ENCODE measurements at regions of chr9 and their contacts with region 1.

Region 1: DNA sequence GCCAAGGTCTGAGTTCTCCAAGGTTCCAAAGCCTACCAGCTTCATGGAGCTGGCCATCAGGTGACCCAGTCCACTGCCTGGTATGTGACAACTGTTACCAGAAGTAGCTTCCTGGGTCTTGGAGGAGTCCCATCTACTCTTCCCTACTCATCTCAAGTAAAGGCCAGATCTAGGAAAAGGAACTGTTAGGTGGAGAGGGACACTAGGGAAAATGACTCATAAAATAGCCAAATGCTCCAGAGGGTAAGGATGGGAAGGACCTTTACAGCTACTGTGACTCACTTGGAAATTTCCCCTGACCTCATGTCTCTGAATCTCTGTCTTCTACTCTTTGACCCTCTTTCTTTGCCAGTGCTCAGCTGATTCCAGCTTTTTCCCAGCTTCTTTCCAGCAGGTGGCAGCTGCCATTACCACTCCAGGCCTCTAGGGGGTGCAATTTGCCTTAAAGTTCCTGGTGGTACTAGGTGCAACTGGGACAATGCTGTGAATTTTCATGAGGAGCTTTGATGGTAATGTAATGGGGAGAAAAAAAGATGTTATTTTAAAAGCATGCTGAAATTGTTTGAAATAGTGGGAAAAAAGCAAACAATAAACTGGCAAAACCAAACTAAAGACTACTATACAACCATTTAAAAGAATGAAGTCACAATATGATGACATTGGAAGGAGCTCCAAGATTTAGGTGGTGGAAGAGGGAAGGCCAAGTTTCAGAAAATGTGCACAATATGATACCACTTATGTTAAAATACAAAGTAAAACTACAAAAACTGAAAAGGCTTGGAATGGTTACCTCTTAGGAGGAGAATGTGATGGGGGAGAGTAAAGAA is 27.1 kb upstream of the MYORG start:
- DNase-seq: peak; percentile 66
- H3K4me3 ChIP-seq: no peak overlapping the region
- H3K27ac ChIP-seq: no peak overlapping the region
- H3K4me1 ChIP-seq: no peaks in the 10 kb centered on the region
- H3K27me3 ChIP-seq: no peaks in the 10 kb centered on the region
- CTCF ChIP-seq: peak; percentile 87 to 98
- POLR2A ChIP-seq: no peak

Region 2: DNA sequence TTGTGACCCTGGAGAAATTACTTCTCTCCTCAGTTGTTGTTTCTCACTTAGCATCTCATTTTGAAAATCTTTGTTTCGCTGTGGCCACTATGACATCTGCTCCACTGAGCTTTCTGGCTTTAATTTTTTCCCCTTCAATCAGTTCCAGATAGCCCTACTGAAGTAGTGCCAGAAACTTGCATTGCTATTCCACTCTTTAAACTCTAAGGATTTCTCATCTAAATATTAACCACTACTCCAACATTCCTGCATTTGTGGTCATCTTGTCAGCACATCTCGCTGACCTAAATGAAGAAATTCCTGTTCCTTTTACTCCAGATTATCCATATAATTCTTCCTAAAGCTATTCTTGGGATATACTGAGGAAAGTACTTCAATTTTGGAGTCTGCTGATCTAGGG is 914.7 kb before region 1 on chr9:
- CTCF ChIA-PET with region 1: no interaction called
- POLR2A ChIA-PET with region 1: no interaction called
- dilution Hi-C with region 1: no loop called
- intact Hi-C with region 1: no loop called
- DNase-seq: no peak
- H3K4me3 ChIP-seq: no peak overlapping the region
- H3K27ac ChIP-seq: no peak overlapping the region
- H3K4me1 ChIP-seq: no peaks in the 10 kb centered on the region
- H3K27me3 ChIP-seq: no peaks in the 10 kb centered on the region
- CTCF ChIP-seq: no peak
- POLR2A ChIP-seq: no peak

Region 3: GRCh38 chr9:34171753-34172535 is 231.8 kb before region 1 on chr9:
- CTCF ChIA-PET with region 1: no interaction called
- POLR2A ChIA-PET with region 1: no interaction called
- dilution Hi-C with region 1: no loop called
- intact Hi-C with region 1: no loop called
- DNase-seq: no peak
- H3K4me3 ChIP-seq: no peak overlapping the region
- H3K27ac ChIP-seq: no peak overlapping the region
- H3K4me1 ChIP-seq: no peaks in the 10 kb centered on the region
- H3K27me3 ChIP-seq: no peaks in the 10 kb centered on the region
- CTCF ChIP-seq: no peak
- POLR2A ChIP-seq: no peak

Region 4: GRCh38 chr9:34185778-34186551 is 217.8 kb before region 1 on chr9:
- CTCF ChIA-PET with region 1: no interaction called
- POLR2A ChIA-PET with region 1: no interaction called
- dilution Hi-C with region 1: no loop called
- intact Hi-C with region 1: no loop called
- DNase-seq: peak; percentile 92
- H3K4me3 ChIP-seq: peak overlapping the region in 1 of 3 experiments; percentile 34
- H3K27ac ChIP-seq: peak overlapping the region; percentile 50
- H3K4me1 ChIP-seq: peaks cover 20% of the 10 kb centered on the region
- H3K27me3 ChIP-seq: no peaks in the 10 kb centered on the region
- CTCF ChIP-seq: no peak
- POLR2A ChIP-seq: peak; percentile 63

Region 5: GRCh38 chr9:34252670-34253459 is 150.9 kb before region 1 on chr9:
- CTCF ChIA-PET with region 1: no interaction called
- POLR2A ChIA-PET with region 1: no interaction called
- dilution Hi-C with region 1: no loop called
- intact Hi-C with region 1: no loop called
- DNase-seq: peak; percentile 52
- H3K4me3 ChIP-seq: no peak overlapping the region
- H3K27ac ChIP-seq: no peak overlapping the region
- H3K4me1 ChIP-seq: no peaks in the 10 kb centered on the region
- H3K27me3 ChIP-seq: no peaks in the 10 kb centered on the region
- CTCF ChIP-seq: peak; percentile 80 to 83
- POLR2A ChIP-seq: no peak

Region 6: GRCh38 chr9:34334337-34334824 is 69.4 kb before region 1 on chr9:
- CTCF ChIA-PET with region 1: interaction called, 12 read pairs
- POLR2A ChIA-PET with region 1: no interaction called
- dilution Hi-C with region 1: no loop called
- intact Hi-C with region 1: no loop called
- DNase-seq: no peak
- H3K4me3 ChIP-seq: no peak overlapping the region
- H3K27ac ChIP-seq: no peak overlapping the region
- H3K4me1 ChIP-seq: no peaks in the 10 kb centered on the region
- H3K27me3 ChIP-seq: no peaks in the 10 kb centered on the region
- CTCF ChIP-seq: no peak
- POLR2A ChIP-seq: no peak

Region 7: DNA sequence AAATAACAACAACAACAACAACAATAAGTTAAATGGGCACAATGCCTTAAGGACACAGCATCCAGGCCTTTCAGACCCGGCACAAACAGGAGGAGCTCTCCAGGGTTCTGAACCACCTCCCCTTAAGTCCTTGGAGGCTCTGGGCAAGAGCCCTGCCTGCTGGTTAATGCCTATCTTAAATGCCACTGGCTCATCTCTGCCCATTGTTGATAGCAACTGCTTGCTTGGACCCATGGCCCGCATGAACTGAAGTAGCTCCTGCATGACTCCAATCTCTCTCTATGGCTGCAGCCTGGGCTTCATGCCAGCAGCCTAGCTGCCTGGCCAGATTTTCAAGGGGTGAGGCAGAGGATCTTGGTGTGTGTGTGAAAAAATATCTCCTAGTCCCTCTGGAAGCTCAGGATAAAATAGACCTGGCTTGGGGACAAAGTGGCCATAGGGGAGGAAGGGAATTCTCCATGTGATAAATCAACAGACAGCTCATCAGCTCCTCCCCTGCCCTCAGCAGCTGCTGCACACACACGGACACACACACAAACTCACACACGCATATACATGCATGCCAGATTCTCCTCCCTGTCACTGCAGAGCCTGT is 27.2 kb after region 1 on chr9:
- CTCF ChIA-PET with region 1: interaction called, 108 read pairs
- POLR2A ChIA-PET with region 1: no interaction called
- dilution Hi-C with region 1: no loop called
- intact Hi-C with region 1: no loop called
- DNase-seq: peak; percentile 64
- H3K4me3 ChIP-seq: no peak overlapping the region
- H3K27ac ChIP-seq: no peak overlapping the region
- H3K4me1 ChIP-seq: peaks cover 15% of the 10 kb centered on the region
- H3K27me3 ChIP-seq: no peaks in the 10 kb centered on the region
- CTCF ChIP-seq: no peak
- POLR2A ChIP-seq: no peak

Region 8: DNA sequence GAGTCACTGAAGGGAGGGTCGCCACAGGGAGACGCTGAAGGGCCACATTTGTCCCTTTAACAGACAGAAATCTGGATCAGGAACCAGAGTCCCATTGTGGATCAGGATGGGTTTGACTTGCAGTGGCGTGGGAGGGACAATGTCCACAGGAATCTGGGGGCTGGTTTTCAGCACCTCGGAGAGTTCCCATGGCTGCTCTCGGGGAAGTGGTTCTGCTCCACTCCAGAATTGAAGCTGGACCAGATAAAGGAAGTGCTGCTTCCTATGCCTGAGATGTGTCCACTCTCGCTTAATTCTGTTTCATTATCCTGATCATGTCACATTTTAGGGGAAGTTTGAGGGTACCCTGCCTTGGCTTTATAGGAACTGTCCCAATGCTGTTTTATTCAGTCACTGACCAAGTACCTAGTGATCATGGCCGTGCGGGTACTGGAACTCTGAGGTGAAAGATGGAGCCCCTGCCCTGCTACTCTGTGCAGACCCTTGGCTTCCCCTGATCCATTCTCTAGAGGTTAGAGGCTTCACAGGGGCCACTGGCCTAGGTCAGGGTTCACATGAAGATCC is 90.3 kb after region 1 on chr9:
- CTCF ChIA-PET with region 1: interaction called, 45 read pairs
- POLR2A ChIA-PET with region 1: no interaction called
- dilution Hi-C with region 1: no loop called
- intact Hi-C with region 1: no loop called
- DNase-seq: peak; percentile 49
- H3K4me3 ChIP-seq: no peak overlapping the region
- H3K27ac ChIP-seq: no peak overlapping the region
- H3K4me1 ChIP-seq: peaks cover 14% of the 10 kb centered on the region
- H3K27me3 ChIP-seq: peaks cover 6 to 8% of the 10 kb centered on the region in 2 experiments
- CTCF ChIP-seq: no peak
- POLR2A ChIP-seq: no peak

Region 9: DNA sequence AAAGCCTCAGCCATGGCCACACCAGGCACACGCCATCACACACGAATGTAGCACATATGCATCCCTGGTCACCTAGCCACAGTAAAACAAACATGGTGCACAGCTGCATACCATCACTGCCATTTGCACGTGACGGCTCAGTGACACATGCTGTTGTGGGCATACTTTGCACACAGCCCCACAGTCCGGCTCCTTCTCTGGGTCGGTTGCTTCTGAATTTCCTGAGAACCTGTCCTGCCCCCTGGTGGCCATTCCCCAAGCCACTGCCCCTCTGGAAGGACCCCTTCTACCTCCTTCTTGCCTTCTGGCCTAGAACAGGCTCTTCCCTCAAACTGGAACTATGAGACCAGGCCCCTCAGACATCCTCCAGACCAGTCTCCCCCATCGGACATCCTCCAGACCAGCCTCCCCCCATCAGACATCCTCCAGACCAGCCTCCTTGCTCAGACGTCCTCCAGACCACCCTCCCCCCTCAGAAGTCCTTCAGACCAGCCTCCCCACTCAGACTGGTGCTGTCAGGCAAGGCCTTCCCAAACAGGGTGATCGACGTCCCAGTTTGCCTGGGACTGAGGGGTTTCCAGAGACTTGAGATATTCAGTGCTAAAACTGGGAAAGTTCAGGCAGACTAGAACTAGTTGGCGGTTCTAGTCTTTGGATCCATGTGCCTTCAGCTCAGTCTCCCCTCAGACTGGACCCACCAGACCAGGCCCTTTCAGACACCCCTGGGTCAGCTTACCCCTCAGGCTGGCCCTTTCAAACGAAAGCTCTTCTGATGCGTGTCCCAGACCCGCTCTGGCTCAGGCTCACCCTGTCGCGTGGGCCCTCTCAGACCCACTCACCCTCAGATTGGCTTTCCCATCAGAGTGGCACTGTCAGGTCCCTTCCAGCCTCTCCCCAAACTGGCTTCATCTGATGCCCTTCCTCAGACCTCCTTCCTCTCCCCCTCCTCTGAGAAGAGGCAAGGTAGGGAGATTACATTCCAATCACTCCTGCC is 143.4 kb after region 1 on chr9:
- CTCF ChIA-PET with region 1: interaction called, 141 read pairs
- POLR2A ChIA-PET with region 1: no interaction called
- dilution Hi-C with region 1: no loop called
- intact Hi-C with region 1: loop called (anchors 1 kb)
- DNase-seq: peak; percentile 66
- H3K4me3 ChIP-seq: no peak overlapping the region
- H3K27ac ChIP-seq: no peak overlapping the region
- H3K4me1 ChIP-seq: no peaks in the 10 kb centered on the region
- H3K27me3 ChIP-seq: peaks cover 5 to 7% of the 10 kb centered on the region in 2 experiments
- CTCF ChIP-seq: peak; percentile 73 to 85
- POLR2A ChIP-seq: no peak

Region 10: DNA sequence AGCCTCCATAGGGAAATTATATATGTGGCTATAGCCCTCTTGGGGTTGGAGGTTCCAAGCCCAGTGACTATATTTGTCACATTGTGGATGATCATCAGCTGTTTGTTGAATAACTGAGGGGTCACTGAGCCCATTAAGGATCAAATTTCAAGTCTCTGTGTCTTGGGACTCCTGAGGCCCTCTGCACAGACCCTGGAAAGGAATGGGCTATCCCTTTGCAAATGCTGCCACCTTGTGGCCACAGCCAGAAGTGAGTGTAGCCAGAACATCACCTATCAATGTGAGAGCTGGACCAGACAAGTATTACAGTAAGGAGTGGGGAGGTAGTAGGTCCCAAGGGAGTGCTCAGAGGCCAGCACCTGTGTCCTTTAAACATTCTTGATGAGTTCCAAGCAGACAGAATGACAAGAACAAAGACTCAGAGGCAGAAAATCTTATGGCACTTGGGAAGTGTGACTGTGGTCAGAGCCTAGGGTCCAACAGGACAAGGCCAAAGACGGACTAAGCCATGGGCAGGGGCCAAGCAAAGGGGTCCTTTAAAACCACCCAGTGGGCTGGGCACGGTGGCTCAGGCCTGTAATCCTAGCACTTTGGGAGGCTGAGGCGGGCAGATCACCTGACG is 200.0 kb after region 1 on chr9:
- CTCF ChIA-PET with region 1: interaction called, 65 read pairs
- POLR2A ChIA-PET with region 1: no interaction called
- dilution Hi-C with region 1: no loop called
- intact Hi-C with region 1: no loop called
- DNase-seq: peak; percentile 77
- H3K4me3 ChIP-seq: no peak overlapping the region
- H3K27ac ChIP-seq: no peak overlapping the region
- H3K4me1 ChIP-seq: no peaks in the 10 kb centered on the region
- H3K27me3 ChIP-seq: peaks cover 0 to 10% of the 10 kb centered on the region in 2 experiments
- CTCF ChIP-seq: peak; percentile 85 to 89
- POLR2A ChIP-seq: no peak

Measured in endothelial cell of umbilical vein (primary cell).